ENCODE measurements at regions of chrX and their contacts with region 1.

Region 1: GRCh38 chrX:14029425-14030173 is at the start of gene GEMIN8:
- DNase-seq: peak; percentile 94
- H3K4me3 ChIP-seq: peak within 1 kb of the TSS; percentile 62 to 67 (median 66)
- H3K27ac ChIP-seq: peak within 1 kb of the TSS; percentile 80 to 88 (median 84)
- H3K4me1 ChIP-seq: peaks cover 16 to 26% (median 20%) of the 10 kb centered on the region in 4 donors
- H3K27me3 ChIP-seq: no peaks in the 10 kb centered on the region
- CTCF ChIP-seq: peak in 2 of 3 experiments; percentile 4 to 8
- EP300 ChIP-seq: no peak
- POLR2A ChIP-seq: peak; percentile 62
- total RNA-seq, gene GEMIN8: 14.4 to 31.0 (median 25.3) TPM

Region 2: DNA sequence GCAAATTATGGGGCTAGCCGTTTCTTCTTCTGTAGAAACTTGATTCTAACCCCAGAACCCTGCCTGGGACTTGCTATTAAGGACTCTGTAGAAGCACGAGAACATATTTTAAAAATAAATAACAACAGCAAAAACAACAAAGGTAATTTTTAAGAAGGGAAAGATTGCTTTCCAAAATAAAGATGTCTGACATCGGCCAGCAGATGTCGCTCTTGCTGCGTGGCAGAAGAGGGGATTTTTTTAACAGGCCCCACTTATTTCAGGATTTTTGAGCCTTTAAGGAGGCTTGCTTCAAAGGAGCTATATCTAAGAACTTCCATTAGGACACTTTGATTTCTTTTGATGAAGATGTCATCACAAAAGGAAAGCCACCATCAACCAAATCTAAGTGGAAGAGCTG is 523.0 kb before region 1 on chrX:
- intact Hi-C with region 1: loop called (anchors 5 kb)
- DNase-seq: no peak
- H3K4me3 ChIP-seq: no peak overlapping the region
- H3K27ac ChIP-seq: no peak overlapping the region
- H3K4me1 ChIP-seq: no peaks in the 10 kb centered on the region
- H3K27me3 ChIP-seq: no peaks in the 10 kb centered on the region
- CTCF ChIP-seq: peak; percentile 70 to 83 (median 71)
- EP300 ChIP-seq: no peak
- POLR2A ChIP-seq: no peak

Region 3: GRCh38 chrX:13658602-13659001 is 371.0 kb before region 1 on chrX:
- intact Hi-C with region 1: loop called (anchors 5 kb)
- DNase-seq: no peak
- H3K4me3 ChIP-seq: no peak overlapping the region
- H3K27ac ChIP-seq: peak overlapping the region; percentile 56 to 62 (median 58)
- H3K4me1 ChIP-seq: peaks cover 0 to 33% (median 21%) of the 10 kb centered on the region in 4 donors
- H3K27me3 ChIP-seq: no peaks in the 10 kb centered on the region
- CTCF ChIP-seq: peak; percentile 64 to 87 (median 70)
- EP300 ChIP-seq: no peak
- POLR2A ChIP-seq: no peak

Region 4: DNA sequence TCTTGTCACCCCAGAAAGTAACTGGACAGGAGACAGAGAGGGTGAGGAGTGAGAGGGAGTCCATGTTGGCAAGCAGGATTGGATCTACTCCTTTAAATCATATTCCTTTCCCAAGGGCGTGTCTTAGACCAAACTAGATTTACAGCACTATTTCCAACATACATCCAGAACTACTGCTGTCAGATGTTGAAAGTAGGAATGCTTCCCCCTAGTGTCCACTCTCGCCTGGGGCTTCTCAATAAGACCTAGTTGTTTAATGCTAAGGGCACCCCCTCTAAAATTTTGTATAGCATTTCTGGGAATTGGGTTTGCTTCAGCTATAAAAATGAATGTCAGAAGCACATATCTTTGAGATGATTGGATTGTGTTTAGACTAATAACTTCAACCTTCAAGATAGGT is 281.8 kb before region 1 on chrX:
- intact Hi-C with region 1: loop called (anchors 5 kb)
- DNase-seq: no peak
- H3K4me3 ChIP-seq: no peak overlapping the region
- H3K27ac ChIP-seq: no peak overlapping the region
- H3K4me1 ChIP-seq: peaks cover 0 to 8% (median under 1%) of the 10 kb centered on the region in 4 donors
- H3K27me3 ChIP-seq: no peaks in the 10 kb centered on the region
- CTCF ChIP-seq: peak; percentile 12 to 52 (median 24)
- EP300 ChIP-seq: no peak
- POLR2A ChIP-seq: no peak

Region 5: DNA sequence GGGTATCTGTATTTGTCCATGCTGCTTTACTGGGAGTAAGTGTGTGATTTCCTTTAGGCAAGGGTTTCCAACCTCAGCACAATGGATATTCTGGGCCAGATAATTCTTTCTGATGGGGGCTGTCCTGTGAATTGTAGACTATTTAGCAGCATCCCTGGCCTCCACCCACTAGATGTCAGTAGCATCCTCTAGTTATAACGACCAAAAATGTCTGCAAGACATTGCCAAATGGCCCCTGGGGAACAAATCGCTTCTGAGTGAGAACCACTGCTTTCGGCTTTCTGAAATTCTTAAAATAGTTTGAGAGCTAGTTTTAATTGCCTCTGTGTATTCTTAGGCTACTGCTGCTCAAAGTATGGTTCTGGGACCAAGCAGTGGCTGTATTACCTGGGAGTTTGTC is 131.5 kb before region 1 on chrX:
- intact Hi-C with region 1: loop called (anchors 2 kb)
- DNase-seq: no peak
- H3K4me3 ChIP-seq: no peak overlapping the region
- H3K27ac ChIP-seq: peak overlapping the region in 2 of 4 donors; percentile 18 to 25
- H3K4me1 ChIP-seq: peaks cover 0 to 36% (median 16%) of the 10 kb centered on the region in 4 donors
- H3K27me3 ChIP-seq: no peaks in the 10 kb centered on the region
- CTCF ChIP-seq: peak in 2 of 3 experiments; percentile 20 to 40
- EP300 ChIP-seq: no peak
- POLR2A ChIP-seq: no peak

Measured in esophagus muscularis mucosa (tissue), 4 donors.